ENCODE measurements at regions of chr14 and their contacts with region 1.

Region 1: DNA sequence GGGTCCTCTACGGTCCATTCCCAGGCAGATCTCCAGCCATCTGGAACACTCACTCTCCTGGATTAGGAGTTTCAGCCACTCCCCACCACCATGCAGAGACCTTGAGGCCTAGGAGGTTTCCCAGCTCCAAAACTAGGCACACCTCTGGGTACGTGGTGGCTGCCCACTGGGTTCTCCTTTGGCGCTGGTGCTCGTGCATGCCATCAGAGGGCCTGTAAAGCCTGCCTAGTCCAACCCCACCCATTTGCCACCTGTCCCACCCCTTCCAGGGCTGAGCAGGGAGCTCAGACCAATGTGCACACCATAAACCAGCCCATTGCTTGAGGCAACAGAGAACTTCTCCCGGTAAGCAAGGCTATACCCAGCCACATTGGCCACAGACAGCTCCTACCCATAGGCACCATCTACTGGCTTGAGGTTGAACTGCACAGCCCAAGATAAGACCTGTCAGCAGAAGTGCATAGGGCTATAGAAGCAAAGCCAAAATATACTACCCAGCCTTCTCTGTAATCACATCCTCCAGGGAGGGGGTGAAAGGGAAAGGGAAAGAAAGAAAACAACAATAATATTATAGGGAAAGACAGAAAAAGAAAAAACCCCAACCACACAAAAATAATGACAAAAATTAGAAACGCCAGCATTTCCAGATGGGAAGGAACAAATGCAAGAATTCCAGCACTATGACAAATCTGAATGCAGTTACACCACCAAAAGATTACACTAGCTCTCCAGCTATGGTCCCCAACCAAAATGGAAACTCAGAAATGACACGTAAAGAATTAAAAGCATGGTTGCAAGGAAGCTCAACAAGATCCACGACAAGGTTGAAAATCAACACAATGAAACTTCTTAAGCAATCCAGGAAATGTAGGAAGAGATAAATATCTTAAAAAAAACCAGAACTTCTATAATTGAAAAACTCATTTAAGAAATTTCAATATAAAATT is 111.9 kb upstream of the CCDC175 start:
- DNase-seq: peak; percentile 12
- H3K4me3 ChIP-seq: no peak overlapping the region
- CTCF ChIP-seq: peak; percentile 84

Region 2: DNA sequence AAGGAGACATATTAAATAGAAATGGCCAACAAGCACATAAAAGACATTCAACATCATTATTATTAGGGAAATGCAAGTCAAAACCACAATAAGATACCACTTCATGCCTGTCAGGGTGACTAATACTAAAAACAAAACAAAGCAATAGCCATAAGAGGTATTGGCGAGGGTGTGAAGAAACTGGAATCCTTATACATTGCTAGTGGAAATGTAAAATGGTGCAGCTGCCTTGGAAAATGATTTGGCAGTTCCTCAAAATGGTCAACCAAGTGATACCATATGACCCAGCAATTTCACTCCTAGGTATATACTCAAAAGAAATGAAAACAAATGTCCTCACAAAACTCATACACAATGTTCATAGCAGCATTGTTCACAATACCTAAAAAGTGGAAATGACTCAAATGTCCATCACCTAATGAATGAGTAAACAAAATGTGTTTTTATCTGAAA is 250.3 kb before region 1 on chr14:
- CTCF ChIA-PET with region 1: no interaction called
- POLR2A ChIA-PET with region 1: no interaction called
- DNase-seq: peak; percentile 71
- H3K4me3 ChIP-seq: no peak overlapping the region
- CTCF ChIP-seq: no peak

Region 3: GRCh38 chr14:59507063-59507780 is 181.3 kb before region 1 on chr14:
- CTCF ChIA-PET with region 1: interaction called, 15 read pairs
- POLR2A ChIA-PET with region 1: no interaction called
- DNase-seq: no peak
- H3K4me3 ChIP-seq: no peak overlapping the region
- CTCF ChIP-seq: peak; percentile 84

Region 4: DNA sequence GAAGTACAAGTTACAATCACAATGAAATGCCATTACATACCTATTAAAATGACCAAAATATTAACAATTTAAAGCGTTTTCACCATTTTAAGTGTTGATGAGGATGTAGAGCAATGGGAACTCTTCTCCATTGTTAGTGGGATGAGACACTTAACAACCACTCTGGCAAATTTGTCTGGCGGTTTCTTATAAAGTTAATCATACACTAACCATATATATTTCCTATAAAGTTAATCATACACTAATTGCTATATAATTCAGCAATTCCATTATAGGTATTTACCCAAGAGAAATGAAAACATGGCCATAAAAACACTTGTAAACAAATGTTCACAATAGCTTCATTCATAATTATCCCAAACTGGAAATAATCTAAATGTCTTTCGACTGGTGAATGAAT is 168.3 kb before region 1 on chr14:
- CTCF ChIA-PET with region 1: no interaction called
- POLR2A ChIA-PET with region 1: no interaction called
- DNase-seq: no peak
- H3K4me3 ChIP-seq: no peak overlapping the region
- CTCF ChIP-seq: no peak

Region 5: GRCh38 chr14:59632381-59632780 is 56.1 kb before region 1 on chr14:
- CTCF ChIA-PET with region 1: interaction called, 51 read pairs
- POLR2A ChIA-PET with region 1: no interaction called
- DNase-seq: no peak
- H3K4me3 ChIP-seq: no peak overlapping the region
- CTCF ChIP-seq: peak; percentile 39

Region 6: GRCh38 chr14:59698793-59699192 is 10.3 kb after region 1 on chr14:
- CTCF ChIA-PET with region 1: interaction called, 23 read pairs
- POLR2A ChIA-PET with region 1: no interaction called
- DNase-seq: no peak
- H3K4me3 ChIP-seq: no peak overlapping the region
- CTCF ChIP-seq: no peak